ENCODE measurements at regions of chr1 and their contacts with region 1.

Region 1: GRCh38 chr1:113759333-113760101 is at the start of gene PHTF1:
- DNase-seq: peak; percentile 73
- ATAC-seq: peak; percentile 88
- H3K4me3 Mint-ChIP-seq: peak within 1 kb of the TSS; percentile 94
- H3K27ac Mint-ChIP-seq: peak within 1 kb of the TSS; percentile 98
- H3K4me1 Mint-ChIP-seq: peaks cover 21% of the 10 kb centered on the region
- H3K27me3 Mint-ChIP-seq: no peaks in the 10 kb centered on the region
- CTCF ChIP-seq: no peak
- total RNA-seq, gene PHTF1: 19.2 and 25.0 TPM in 2 replicates

Region 2: GRCh38 chr1:112955781-112956543 is 803.6 kb before region 1 on chr1 and contains the start of gene SLC16A1:
- CTCF ChIA-PET with region 1: no interaction called
- POLR2A ChIA-PET with region 1: interaction called, 5 read pairs
- intact Hi-C with region 1: loop called (anchors 2 kb)
- DNase-seq: peak; percentile 89
- ATAC-seq: peak; percentile 82
- H3K4me3 Mint-ChIP-seq: peak within 1 kb of the TSS; percentile 98
- H3K27ac Mint-ChIP-seq: peak within 1 kb of the TSS; percentile 98
- H3K4me1 Mint-ChIP-seq: peaks cover 49% of the 10 kb centered on the region
- H3K27me3 Mint-ChIP-seq: no peaks in the 10 kb centered on the region
- CTCF ChIP-seq: no peak
- total RNA-seq, gene SLC16A1: 17.8 and 17.9 TPM in 2 replicates

Region 3: DNA sequence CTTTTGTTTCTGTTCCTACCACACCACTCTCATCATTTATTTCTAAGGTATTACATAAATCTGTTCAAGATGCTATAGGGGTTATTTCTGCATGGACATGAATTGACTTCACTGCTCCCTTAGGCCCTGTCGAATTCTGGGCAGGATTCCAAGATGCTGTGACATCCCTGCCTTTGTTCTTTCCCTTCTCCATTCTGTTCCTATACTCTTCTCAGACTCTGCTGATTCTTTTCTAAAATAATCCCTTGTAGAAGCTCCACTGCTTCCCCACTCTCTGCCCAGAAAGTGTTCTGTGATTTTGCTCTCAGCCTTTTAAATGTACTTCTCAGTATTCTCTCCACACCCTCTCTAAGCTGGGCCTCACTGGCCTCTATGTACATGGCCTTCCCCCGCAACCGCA is 99.4 kb before region 1 on chr1:
- CTCF ChIA-PET with region 1: no interaction called
- POLR2A ChIA-PET with region 1: no interaction called
- intact Hi-C with region 1: no loop called
- DNase-seq: no peak
- ATAC-seq: no peak
- H3K4me3 Mint-ChIP-seq: no peak overlapping the region
- H3K27ac Mint-ChIP-seq: no peak overlapping the region
- H3K4me1 Mint-ChIP-seq: no peaks in the 10 kb centered on the region
- H3K27me3 Mint-ChIP-seq: no peaks in the 10 kb centered on the region
- CTCF ChIP-seq: no peak

Region 4: DNA sequence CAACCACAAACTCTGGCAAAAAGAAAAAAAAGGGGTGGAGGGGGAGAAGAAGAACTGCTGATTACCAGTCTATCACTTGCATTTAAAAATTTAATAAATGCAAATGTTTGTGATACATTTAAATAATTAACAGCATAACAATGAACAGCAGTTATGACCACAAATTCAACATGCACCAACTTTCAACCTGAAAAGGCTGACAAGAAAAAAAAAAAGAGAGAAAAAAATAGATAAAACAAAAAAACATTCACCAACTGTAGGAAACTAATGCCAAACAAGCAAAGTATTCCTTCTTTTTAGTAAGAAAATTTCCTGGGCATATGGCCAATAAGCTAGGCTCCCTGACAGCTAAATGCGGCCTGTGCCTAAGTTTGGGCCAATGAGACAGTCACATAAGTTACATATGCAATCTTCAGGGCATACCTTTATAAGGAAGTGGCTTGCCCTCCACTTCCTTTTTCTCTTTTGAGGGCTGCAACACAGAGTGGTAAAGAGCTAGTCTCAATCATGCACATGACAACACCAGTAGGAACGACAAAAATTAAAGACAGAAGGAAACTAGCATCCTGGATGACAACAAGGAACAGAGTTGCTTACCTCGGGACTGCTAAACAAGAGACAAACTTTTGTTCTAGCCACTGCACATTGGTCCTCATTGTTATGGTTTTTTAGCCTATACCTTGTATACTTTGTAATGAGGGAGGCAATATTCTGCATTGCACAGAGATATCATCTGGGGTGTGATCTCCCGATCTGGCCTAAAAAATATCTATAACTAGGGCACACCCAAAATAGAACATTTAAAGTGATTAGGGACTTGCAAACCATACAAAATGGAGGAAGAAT is 24.0 kb after region 1 on chr1:
- CTCF ChIA-PET with region 1: no interaction called
- POLR2A ChIA-PET with region 1: interaction called, 14 read pairs
- intact Hi-C with region 1: loop called (anchors 1 kb)
- DNase-seq: no peak
- ATAC-seq: peak; percentile 99
- H3K4me3 Mint-ChIP-seq: peak overlapping the region; percentile 5
- H3K27ac Mint-ChIP-seq: peak overlapping the region; percentile 59
- H3K4me1 Mint-ChIP-seq: peaks cover 32% of the 10 kb centered on the region
- H3K27me3 Mint-ChIP-seq: no peaks in the 10 kb centered on the region
- CTCF ChIP-seq: no peak

Region 5: GRCh38 chr1:113887402-113888175 is 128.1 kb after region 1 on chr1 and contains the start of gene BCL2L15:
- CTCF ChIA-PET with region 1: no interaction called
- POLR2A ChIA-PET with region 1: interaction called, 10 read pairs
- intact Hi-C with region 1: no loop called
- DNase-seq: no peak
- ATAC-seq: no peak
- H3K4me3 Mint-ChIP-seq: no peak within 1 kb of the TSS
- H3K27ac Mint-ChIP-seq: no peak within 1 kb of the TSS
- H3K4me1 Mint-ChIP-seq: peaks cover 5% of the 10 kb centered on the region
- H3K27me3 Mint-ChIP-seq: no peaks in the 10 kb centered on the region
- CTCF ChIP-seq: no peak
- total RNA-seq, gene BCL2L15: 0.83 and 3.7 TPM in 2 replicates

Region 6: GRCh38 chr1:113928941-113929749 is 169.6 kb after region 1 on chr1 and contains the start of gene HIPK1:
- CTCF ChIA-PET with region 1: interaction called, 7 read pairs
- POLR2A ChIA-PET with region 1: interaction called, 24 read pairs
- intact Hi-C with region 1: loop called (anchors 1 kb)
- DNase-seq: peak; percentile 93
- ATAC-seq: peak; percentile 73
- H3K4me3 Mint-ChIP-seq: peak within 1 kb of the TSS; percentile 99
- H3K27ac Mint-ChIP-seq: peak within 1 kb of the TSS; percentile 99
- H3K4me1 Mint-ChIP-seq: peaks cover 50% of the 10 kb centered on the region
- H3K27me3 Mint-ChIP-seq: no peaks in the 10 kb centered on the region
- CTCF ChIP-seq: no peak
- total RNA-seq, gene HIPK1: 38.0 and 39.0 TPM in 2 replicates

Region 7: GRCh38 chr1:114716304-114717170 is 957.0 kb after region 1 on chr1 and contains the start of gene NRAS:
- CTCF ChIA-PET with region 1: no interaction called
- POLR2A ChIA-PET with region 1: interaction called, 4 read pairs
- intact Hi-C with region 1: loop called (anchors 1 kb)
- DNase-seq: peak; percentile 97
- ATAC-seq: peak; percentile 94
- H3K4me3 Mint-ChIP-seq: peak within 1 kb of the TSS; percentile 99
- H3K27ac Mint-ChIP-seq: peak within 1 kb of the TSS; percentile 98
- H3K4me1 Mint-ChIP-seq: peaks cover 28% of the 10 kb centered on the region
- H3K27me3 Mint-ChIP-seq: no peaks in the 10 kb centered on the region
- CTCF ChIP-seq: no peak
- total RNA-seq, gene NRAS: 53.3 and 55.5 TPM in 2 replicates